ENCODE measurements at regions of chr9 and their contacts with region 1.

Region 1: DNA sequence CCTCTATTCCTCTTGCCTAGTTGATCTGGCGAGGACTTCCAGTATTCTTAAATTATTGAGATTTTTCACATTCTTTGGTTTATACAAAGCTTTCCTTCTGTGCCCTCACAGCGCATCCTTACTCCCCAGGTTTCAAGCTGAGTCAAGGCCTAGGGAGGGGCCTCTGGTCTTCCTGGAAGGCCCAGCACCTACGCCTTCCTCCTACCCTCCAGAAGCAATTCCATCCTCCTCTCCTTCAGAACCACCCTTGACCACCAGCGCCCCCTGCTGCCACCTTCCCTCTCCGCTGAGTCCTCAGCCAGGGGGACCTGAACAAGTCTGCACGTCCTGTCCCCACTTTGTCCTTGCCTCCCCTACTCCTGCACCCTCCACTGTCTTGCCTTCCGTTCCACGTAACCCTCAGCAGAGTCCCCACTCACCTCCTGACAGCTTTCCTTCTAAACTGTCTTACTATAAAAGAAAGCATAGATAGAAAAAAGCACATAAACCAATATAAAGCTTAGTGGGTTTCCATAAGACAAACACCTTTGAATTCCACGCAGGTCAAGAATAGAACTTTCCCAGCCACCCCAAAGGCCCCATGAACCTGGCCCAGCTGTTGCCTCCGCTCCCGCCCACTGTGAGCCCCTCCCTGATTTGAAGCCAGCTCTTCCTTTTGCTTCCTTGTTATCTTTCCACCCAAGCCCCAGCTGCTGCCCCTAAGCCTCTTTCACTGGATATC is 63.0 kb upstream of the CTSL start:
- DNase-seq: peak; percentile 84
- H3K4me3 Mint-ChIP-seq: no peak overlapping the region
- H3K27ac Mint-ChIP-seq: no peak overlapping the region
- H3K4me1 Mint-ChIP-seq: peaks cover 13% of the 10 kb centered on the region
- H3K27me3 Mint-ChIP-seq: no peaks in the 10 kb centered on the region
- CTCF ChIP-seq: peak; percentile 80

Region 2: DNA sequence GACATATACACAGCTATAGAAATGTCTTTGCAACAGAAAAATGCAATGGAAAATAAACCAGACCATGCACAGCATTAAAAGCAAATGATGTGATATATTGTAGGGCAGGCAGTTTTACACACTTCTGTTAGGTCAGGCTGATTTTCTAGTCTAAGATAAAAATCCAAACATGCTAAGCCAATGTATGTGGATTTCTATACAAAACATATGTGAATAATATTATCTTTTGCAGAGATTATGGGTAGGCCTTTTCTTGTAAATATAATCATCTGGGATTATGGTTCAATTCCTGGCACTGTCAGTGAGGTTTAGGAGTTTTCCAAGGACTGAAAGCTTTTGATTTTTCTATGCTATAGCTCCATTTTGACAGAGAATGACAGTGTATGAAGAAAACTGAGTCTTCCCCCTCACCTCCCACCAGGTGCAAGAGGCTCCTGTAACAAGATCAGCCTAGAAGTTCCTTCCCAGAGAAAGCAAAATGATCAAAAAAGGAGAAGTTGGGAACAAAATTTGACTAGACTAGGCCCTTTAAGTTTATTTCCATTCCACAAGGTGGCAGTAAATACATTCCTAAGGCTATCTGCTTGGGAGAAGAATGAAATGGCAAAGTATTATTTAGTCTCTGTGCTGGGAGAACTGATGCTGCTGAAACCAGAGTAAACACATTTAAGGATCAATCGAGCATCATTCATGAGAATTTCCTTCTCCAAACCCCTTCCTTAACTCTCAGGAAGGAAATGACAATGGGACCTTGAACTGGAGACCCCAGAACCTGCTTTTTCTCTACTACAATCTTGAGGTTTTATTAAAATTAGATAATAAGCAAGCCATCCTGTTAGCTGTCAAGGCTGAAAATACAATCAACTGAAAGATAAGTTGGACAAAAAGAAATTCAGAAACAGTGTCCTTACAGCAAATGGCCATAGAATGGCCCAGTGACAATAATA is 1175.8 kb before region 1 on chr9:
- CTCF ChIA-PET with region 1: no interaction called
- POLR2A ChIA-PET with region 1: no interaction called
- intact Hi-C with region 1: loop called (anchors 2 kb)
- DNase-seq: peak; percentile 64
- H3K4me3 Mint-ChIP-seq: no peak overlapping the region
- H3K27ac Mint-ChIP-seq: no peak overlapping the region
- H3K4me1 Mint-ChIP-seq: peaks cover 6% of the 10 kb centered on the region
- H3K27me3 Mint-ChIP-seq: no peaks in the 10 kb centered on the region
- CTCF ChIP-seq: peak; percentile 76

Region 3: GRCh38 chr9:87140605-87141109 is 522.3 kb before region 1 on chr9:
- CTCF ChIA-PET with region 1: no interaction called
- POLR2A ChIA-PET with region 1: no interaction called
- intact Hi-C with region 1: no loop called
- DNase-seq: no peak
- H3K4me3 Mint-ChIP-seq: no peak overlapping the region
- H3K27ac Mint-ChIP-seq: no peak overlapping the region
- H3K4me1 Mint-ChIP-seq: peaks cover 6% of the 10 kb centered on the region
- H3K27me3 Mint-ChIP-seq: peaks cover 9% of the 10 kb centered on the region
- CTCF ChIP-seq: no peak

Region 4: GRCh38 chr9:87342743-87343142 is 320.2 kb before region 1 on chr9:
- CTCF ChIA-PET with region 1: interaction called, 29 read pairs
- POLR2A ChIA-PET with region 1: interaction called, 3 read pairs
- intact Hi-C with region 1: loop called (anchors 1 kb)
- DNase-seq: peak; percentile 54
- H3K4me3 Mint-ChIP-seq: peak overlapping the region; percentile 35
- H3K27ac Mint-ChIP-seq: no peak overlapping the region
- H3K4me1 Mint-ChIP-seq: peaks cover 37% of the 10 kb centered on the region
- H3K27me3 Mint-ChIP-seq: no peaks in the 10 kb centered on the region
- CTCF ChIP-seq: no peak

Region 5: GRCh38 chr9:87382902-87383301 is 280.1 kb before region 1 on chr9:
- CTCF ChIA-PET with region 1: interaction called, 4 read pairs
- POLR2A ChIA-PET with region 1: interaction called, 10 read pairs
- intact Hi-C with region 1: no loop called
- DNase-seq: peak; percentile 87
- H3K4me3 Mint-ChIP-seq: peak overlapping the region; percentile 32
- H3K27ac Mint-ChIP-seq: peak overlapping the region; percentile 92
- H3K4me1 Mint-ChIP-seq: peaks cover 58% of the 10 kb centered on the region
- H3K27me3 Mint-ChIP-seq: no peaks in the 10 kb centered on the region
- CTCF ChIP-seq: no peak

Region 6: DNA sequence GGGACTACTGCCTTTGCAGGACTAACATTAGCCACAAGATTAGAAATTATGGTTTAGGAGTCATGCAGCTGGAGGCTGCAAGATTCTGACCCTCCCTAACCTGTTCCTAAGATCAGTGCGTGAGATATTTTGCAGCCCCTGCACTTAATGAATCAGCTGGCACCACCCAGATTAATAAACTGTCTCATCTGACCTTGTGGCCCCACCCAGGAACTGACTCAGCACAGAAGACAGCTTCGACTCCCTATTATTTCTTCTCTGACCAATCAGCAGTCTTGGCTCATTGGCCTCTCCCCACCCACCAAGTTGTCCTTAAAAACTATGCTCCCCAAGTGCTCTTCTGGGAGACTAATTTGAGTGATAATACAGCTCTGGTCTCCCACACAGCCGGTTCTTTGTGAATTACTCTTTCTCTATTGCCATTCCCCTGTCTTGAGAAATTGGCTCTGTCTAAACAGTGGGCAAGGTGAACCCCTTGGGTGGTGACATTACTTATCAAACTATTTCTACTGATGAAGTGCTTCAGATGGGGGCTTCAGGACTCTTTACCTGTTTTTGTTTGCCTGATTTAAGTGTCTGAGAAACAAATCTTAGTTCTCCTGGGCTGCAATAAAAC is 80.0 kb after region 1 on chr9:
- CTCF ChIA-PET with region 1: no interaction called
- POLR2A ChIA-PET with region 1: no interaction called
- intact Hi-C with region 1: no loop called
- DNase-seq: peak; percentile 9
- H3K4me3 Mint-ChIP-seq: no peak overlapping the region
- H3K27ac Mint-ChIP-seq: no peak overlapping the region
- H3K4me1 Mint-ChIP-seq: no peaks in the 10 kb centered on the region
- H3K27me3 Mint-ChIP-seq: no peaks in the 10 kb centered on the region
- CTCF ChIP-seq: no peak

Region 7: DNA sequence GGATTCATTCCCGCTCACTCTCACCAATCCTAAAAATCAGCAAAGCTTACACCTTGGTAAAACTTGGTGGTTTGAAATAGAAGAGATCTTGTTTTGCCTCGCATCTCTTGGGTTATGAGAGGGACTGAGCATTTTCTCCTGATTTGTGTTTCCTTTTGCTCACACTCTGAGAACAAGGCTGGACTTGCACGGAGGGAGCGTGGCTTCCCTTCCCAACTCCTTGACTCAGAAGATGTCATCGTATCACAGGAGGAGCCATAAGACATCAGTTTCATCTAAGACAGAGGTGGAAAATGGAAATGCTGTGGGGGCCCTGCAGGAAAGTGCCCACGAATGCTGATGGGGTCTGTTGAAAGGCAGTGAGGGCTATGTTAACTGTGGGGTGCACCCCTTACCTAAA is 100.3 kb after region 1 on chr9:
- CTCF ChIA-PET with region 1: no interaction called
- POLR2A ChIA-PET with region 1: no interaction called
- intact Hi-C with region 1: no loop called
- DNase-seq: peak; percentile 19
- H3K4me3 Mint-ChIP-seq: no peak overlapping the region
- H3K27ac Mint-ChIP-seq: no peak overlapping the region
- H3K4me1 Mint-ChIP-seq: peaks cover 5% of the 10 kb centered on the region
- H3K27me3 Mint-ChIP-seq: no peaks in the 10 kb centered on the region
- CTCF ChIP-seq: no peak